ENCODE measurements at regions of chr13 and their contacts with region 1.

Region 1: DNA sequence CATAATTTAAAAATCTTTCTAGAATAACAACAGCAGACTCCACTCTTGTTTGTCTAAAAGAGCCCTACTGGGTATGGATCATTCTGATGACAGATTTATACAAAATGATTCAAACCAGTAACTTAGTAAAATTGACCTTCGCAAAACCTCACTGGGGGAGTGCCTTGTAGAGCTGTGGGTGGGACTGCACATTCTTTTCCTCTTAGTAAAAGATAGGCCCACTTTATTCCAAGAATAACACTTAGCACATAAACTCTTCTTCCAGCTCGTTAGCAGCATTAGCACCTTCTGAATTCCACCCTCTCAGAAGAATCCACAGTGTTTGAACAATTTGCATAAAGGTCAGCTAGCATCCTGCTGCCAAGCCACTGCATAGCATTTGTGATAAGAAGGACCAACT is 106.8 kb downstream of the STOML3 start:
- DNase-seq: no peak
- H3K4me3 ChIP-seq: no peak overlapping the region
- H3K27ac ChIP-seq: no peak overlapping the region
- H3K4me1 ChIP-seq: no peaks in the 10 kb centered on the region
- H3K27me3 ChIP-seq: no peaks in the 10 kb centered on the region
- CTCF ChIP-seq: no peak
- EP300 ChIP-seq: no peak
- RAD21 ChIP-seq: no peak

Region 2: DNA sequence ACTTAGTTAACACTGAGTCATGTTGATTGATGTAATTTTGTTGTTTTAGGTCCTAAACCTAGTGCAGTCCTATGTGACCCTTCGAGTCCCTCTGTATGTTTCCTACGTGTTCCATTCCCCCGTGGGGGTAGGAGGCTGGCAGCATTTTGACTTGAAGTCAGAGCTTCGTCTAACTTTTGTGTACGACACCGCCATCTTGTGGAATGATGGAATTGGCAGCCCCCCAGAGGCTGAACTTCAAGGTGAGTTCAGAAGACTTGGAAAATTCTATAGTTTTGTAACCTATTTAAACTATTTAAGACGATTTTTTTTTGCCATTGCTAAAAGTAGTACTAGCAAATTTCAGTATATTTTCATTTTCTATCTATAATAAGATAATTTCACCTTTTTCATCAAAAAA is 11.1 kb before region 1 on chr13:
- CTCF ChIA-PET with region 1: interaction called, 23 read pairs
- POLR2A ChIA-PET with region 1: no interaction called
- DNase-seq: peak; percentile 41
- H3K4me3 ChIP-seq: peak overlapping the region in 1 of 2 experiments; percentile 33; a peak in 1 of 4 replicates
- H3K27ac ChIP-seq: no peak overlapping the region
- H3K4me1 ChIP-seq: no peaks in the 10 kb centered on the region
- H3K27me3 ChIP-seq: no peaks in the 10 kb centered on the region
- CTCF ChIP-seq: peak; percentile 67
- EP300 ChIP-seq: no peak
- RAD21 ChIP-seq: peak; percentile 59

Region 3: GRCh38 chr13:38902551-38902950 is 18.8 kb after region 1 on chr13:
- CTCF ChIA-PET with region 1: no interaction called
- POLR2A ChIA-PET with region 1: no interaction called
- DNase-seq: no peak
- H3K4me3 ChIP-seq: no peak overlapping the region
- H3K27ac ChIP-seq: no peak overlapping the region
- H3K4me1 ChIP-seq: no peaks in the 10 kb centered on the region
- H3K27me3 ChIP-seq: no peaks in the 10 kb centered on the region
- CTCF ChIP-seq: no peak
- EP300 ChIP-seq: no peak
- RAD21 ChIP-seq: no peak